Psoas muscle (tissue), 8 donors: ENCODE measurements at regions of chr16 and their contacts with region 1.

Region 1: DNA sequence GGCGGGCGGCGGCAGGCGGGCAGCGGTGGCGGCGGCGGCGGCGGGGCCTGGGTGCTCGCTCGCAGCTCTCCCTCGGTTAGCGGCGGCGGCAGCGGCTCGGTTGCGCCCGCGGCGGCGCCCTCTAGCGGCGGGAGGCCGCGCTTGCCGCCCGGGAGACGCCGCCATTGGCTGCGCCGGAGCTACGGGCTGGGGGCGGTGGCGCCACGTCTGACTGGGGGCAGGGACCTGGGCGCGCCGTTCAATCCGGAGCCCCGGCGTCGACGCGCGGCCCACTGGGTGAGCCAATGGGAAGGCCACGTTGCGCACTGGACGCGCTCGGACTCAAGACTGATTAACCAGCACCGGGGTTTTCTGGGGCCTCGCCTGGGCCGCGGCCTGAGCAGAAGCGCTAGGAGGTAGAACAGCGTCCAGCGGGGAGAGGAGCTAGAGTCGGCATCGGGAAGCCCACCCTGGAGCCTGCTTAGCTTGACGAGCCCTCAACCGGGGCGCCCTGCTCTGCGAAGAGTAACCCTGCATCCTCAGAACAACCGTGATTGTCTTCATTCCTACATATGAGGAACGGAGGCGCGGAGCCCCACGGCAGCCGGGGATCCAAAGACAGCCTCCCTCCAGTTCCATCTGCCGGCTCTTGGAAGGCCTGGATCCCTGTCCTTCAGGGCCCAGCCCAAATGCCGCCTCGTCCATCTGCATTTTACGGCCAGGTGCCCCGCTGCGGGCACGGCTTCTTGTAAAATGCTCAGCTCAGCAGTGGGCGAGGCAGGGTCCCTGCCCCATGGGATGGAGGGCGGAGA is at the start of gene ZC3H7A:
- DNase-seq: peak; percentile 97 to 99
- ATAC-seq: peak; percentile 90 to 94 (median 92)
- H3K4me3 ChIP-seq: peak within 1 kb of the TSS; percentile 99
- H3K27ac ChIP-seq: peak within 1 kb of the TSS; percentile 98
- H3K4me1 ChIP-seq: peaks cover 53% of the 10 kb centered on the region
- H3K27me3 ChIP-seq: no peaks in the 10 kb centered on the region
- CTCF ChIP-seq: peak; percentile 95
- total RNA-seq, gene ZC3H7A: 23.4 to 69.6 (median 40.0) TPM

Region 2: GRCh38 chr16:11675561-11676511 is 121.5 kb before region 1 on chr16:
- intact Hi-C with region 1: loop called in 1 of 2 experiments (anchors 5 kb)
- DNase-seq: peak; percentile 89 to 97
- ATAC-seq: peak; percentile 78 to 81 (median 80)
- H3K4me3 ChIP-seq: peak overlapping the region; percentile 23
- H3K27ac ChIP-seq: peak overlapping the region; percentile 91
- H3K4me1 ChIP-seq: peaks cover 96% of the 10 kb centered on the region
- H3K27me3 ChIP-seq: no peaks in the 10 kb centered on the region
- CTCF ChIP-seq: no peak

Region 3: GRCh38 chr16:11742539-11743307 is 54.6 kb before region 1 on chr16 and contains the start of gene TXNDC11:
- intact Hi-C with region 1: no loop called
- DNase-seq: peak; percentile 99 to 100
- ATAC-seq: peak; percentile 92 to 96 (median 93)
- H3K4me3 ChIP-seq: peak within 1 kb of the TSS; percentile 88
- H3K27ac ChIP-seq: peak within 1 kb of the TSS; percentile 99
- H3K4me1 ChIP-seq: peaks cover 37% of the 10 kb centered on the region
- H3K27me3 ChIP-seq: no peaks in the 10 kb centered on the region
- CTCF ChIP-seq: no peak
- total RNA-seq, gene TXNDC11: 21.3 to 37.2 (median 33.5) TPM

Region 4: DNA sequence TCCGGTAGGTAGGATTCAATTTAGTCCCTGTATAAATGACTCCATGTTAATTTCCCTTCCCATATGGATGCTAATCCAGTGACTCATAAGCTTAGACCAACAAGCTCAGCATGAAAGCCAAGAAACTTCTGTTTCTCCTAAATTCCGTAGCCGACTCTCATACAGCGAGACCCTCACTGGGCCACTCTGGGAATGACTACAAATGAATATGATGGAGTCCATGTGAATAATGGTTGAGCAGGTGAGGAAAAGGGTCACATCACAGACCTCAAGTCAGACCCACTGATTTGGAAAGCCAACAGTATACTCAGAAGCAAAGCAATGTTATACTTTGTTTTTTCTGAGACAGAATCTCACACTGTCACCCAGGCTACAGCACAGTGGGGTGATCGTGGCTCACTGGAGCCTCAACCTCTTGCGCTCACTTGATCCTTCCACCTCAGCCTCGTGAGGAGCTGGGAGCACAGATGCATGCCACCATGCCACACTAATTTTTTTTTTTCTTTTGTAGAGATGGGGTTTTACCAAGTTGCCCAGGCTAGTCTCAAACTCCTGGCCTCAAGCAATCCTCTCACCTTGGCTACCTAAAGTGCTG is 39.4 kb after region 1 on chr16:
- intact Hi-C with region 1: loop called in 1 of 2 experiments (anchors 5 kb)
- DNase-seq: no peak
- ATAC-seq: no peak
- H3K4me3 ChIP-seq: no peak overlapping the region
- H3K27ac ChIP-seq: peak overlapping the region; percentile 32
- H3K4me1 ChIP-seq: peaks cover 11% of the 10 kb centered on the region
- H3K27me3 ChIP-seq: no peaks in the 10 kb centered on the region
- CTCF ChIP-seq: no peak

Region 5: GRCh38 chr16:11851294-11852091 is 54.1 kb after region 1 on chr16 and contains the start of gene RSL1D1:
- intact Hi-C with region 1: loop called in 1 of 2 experiments (anchors 5 kb)
- DNase-seq: peak; percentile 90 to 96
- ATAC-seq: peak; percentile 97 to 98 (median 98)
- H3K4me3 ChIP-seq: peak within 1 kb of the TSS; percentile 99
- H3K27ac ChIP-seq: peak within 1 kb of the TSS; percentile 97
- H3K4me1 ChIP-seq: peaks cover 22% of the 10 kb centered on the region
- H3K27me3 ChIP-seq: no peaks in the 10 kb centered on the region
- CTCF ChIP-seq: no peak
- total RNA-seq, gene RSL1D1: 197 to 271 (median 256) TPM

Region 6: GRCh38 chr16:11871193-11871592 is 73.8 kb after region 1 on chr16:
- intact Hi-C with region 1: no loop called
- DNase-seq: no peak
- ATAC-seq: peak in 1 of 4 donors; percentile 26
- H3K4me3 ChIP-seq: no peak overlapping the region
- H3K27ac ChIP-seq: no peak overlapping the region
- H3K4me1 ChIP-seq: peaks cover 25% of the 10 kb centered on the region
- H3K27me3 ChIP-seq: no peaks in the 10 kb centered on the region
- CTCF ChIP-seq: no peak